ENCODE measurements at regions of chr6 and their contacts with region 1.

Region 1: GRCh38 chr6:141483598-141484061 is 649.1 kb upstream of the GJE1 start:
- DNase-seq: peak; percentile 62
- H3K4me3 Mint-ChIP-seq: peak overlapping the region; percentile 81
- H3K27ac Mint-ChIP-seq: peak overlapping the region; percentile 97
- H3K4me1 Mint-ChIP-seq: peaks cover 48% of the 10 kb centered on the region
- H3K27me3 Mint-ChIP-seq: no peaks in the 10 kb centered on the region

Region 2: DNA sequence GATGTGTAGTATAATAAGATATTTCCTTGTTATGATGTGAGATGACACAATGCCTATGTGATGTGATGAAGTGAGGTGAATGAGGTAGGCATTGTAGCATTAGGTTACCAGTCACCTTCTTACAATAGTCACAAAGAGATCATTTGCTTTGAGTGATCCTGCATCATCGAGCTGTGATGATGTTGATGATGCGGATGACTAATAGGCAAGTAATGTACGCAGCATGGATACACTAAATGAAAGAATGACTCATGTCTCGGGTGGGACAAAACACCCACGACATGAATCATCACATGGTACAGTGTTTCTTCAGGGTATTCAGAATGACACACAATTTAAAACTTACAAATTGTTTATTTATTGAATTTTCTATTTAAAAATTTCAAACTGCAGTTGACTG is 157.2 kb before region 1 on chr6:
- intact Hi-C with region 1: loop called (anchors 1 kb)
- DNase-seq: no peak
- H3K4me3 Mint-ChIP-seq: no peak overlapping the region
- H3K27ac Mint-ChIP-seq: no peak overlapping the region
- H3K4me1 Mint-ChIP-seq: peaks cover 13% of the 10 kb centered on the region
- H3K27me3 Mint-ChIP-seq: peaks cover 2% of the 10 kb centered on the region

Region 3: DNA sequence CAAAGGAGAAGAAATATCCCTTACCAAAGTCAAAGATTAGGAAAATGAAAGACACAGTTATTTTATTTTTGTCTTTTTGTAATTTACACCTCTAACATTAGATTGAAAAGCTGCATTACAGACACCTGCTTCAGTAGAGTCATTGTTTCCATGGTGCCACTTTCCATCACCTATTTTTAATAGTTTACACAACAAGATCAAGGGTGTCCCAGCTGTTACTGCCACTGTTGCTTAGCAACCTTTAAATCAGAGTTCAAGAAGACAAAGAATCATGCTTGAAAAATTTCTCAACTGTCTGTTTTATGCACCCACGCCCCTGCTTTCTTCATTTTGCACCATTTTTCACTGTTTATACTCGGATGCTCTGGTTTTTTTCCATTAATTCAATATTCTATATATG is 19.1 kb before region 1 on chr6:
- intact Hi-C with region 1: loop called (anchors 1 kb)
- DNase-seq: no peak
- H3K4me3 Mint-ChIP-seq: no peak overlapping the region
- H3K27ac Mint-ChIP-seq: no peak overlapping the region
- H3K4me1 Mint-ChIP-seq: peaks cover 14% of the 10 kb centered on the region
- H3K27me3 Mint-ChIP-seq: no peaks in the 10 kb centered on the region

Region 4: DNA sequence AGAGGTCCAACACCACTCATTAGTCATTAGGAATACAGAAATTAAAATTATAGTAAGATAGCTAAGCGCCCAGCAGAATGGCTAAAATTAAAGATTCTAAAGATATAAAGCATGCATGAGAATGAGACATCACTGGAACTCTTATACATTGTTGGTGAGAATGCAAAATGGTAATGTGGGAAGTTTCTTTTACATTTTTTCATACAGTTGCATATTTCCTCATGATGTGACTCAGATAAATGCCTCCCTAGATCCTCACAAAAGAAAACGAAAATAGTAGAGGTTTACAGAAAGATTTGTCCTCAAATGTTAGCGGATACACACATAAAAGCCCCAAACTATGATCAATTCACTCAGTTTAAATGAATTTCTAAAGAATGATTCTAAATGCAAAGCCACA is 15.3 kb after region 1 on chr6:
- intact Hi-C with region 1: no loop called
- DNase-seq: no peak
- H3K4me3 Mint-ChIP-seq: no peak overlapping the region
- H3K27ac Mint-ChIP-seq: no peak overlapping the region
- H3K4me1 Mint-ChIP-seq: no peaks in the 10 kb centered on the region
- H3K27me3 Mint-ChIP-seq: peaks cover 2% of the 10 kb centered on the region

Region 5: DNA sequence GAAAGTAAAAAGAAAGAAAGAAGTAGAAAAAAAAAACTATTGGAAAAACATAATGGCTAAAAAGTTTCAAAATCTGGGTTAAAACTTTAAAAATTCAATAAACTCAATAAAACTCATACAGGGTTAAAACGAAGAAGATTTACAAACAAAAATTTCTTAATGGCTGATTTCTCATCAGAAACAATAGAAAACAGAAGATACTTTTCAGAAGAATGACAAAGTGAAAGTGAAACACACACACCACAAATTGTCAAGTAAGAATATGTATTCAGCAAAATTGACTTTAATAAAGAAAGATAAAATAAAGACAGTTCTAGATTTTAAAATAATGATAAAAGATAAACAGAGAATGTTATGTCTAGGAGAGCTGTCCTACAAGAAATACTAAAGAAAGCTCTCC is 30.2 kb after region 1 on chr6:
- intact Hi-C with region 1: loop called (anchors 2 kb)
- DNase-seq: no peak
- H3K4me3 Mint-ChIP-seq: peak overlapping the region; percentile 26
- H3K27ac Mint-ChIP-seq: no peak overlapping the region
- H3K4me1 Mint-ChIP-seq: peaks cover 13% of the 10 kb centered on the region
- H3K27me3 Mint-ChIP-seq: peaks cover 1% of the 10 kb centered on the region

Region 6: GRCh38 chr6:141562851-141563763 is 79.5 kb after region 1 on chr6:
- intact Hi-C with region 1: loop called (anchors 5 kb)
- DNase-seq: peak; percentile 32
- H3K4me3 Mint-ChIP-seq: peak overlapping the region; percentile 59
- H3K27ac Mint-ChIP-seq: peak overlapping the region; percentile 48
- H3K4me1 Mint-ChIP-seq: peaks cover 18% of the 10 kb centered on the region
- H3K27me3 Mint-ChIP-seq: peaks cover 10% of the 10 kb centered on the region

Region 7: DNA sequence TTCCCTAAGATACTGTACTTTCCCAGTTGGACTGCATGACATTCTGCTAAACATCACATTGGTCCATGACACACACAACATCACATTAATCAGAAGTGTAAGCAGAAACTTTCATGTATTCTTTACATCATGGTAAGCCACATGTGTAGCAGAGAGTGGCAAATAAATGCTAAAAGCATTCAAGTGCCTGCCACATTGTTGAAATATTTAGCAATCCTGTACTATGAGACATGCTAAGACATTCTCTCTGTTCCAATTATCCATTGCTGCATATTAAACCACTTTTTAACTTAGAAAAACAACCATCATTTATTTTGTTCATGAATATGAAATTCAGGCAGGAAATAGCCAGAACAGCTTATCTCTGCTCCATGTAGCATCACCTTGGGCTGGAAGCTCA is 441.4 kb after region 1 on chr6:
- intact Hi-C with region 1: no loop called
- DNase-seq: no peak
- H3K4me3 Mint-ChIP-seq: no peak overlapping the region
- H3K27ac Mint-ChIP-seq: no peak overlapping the region
- H3K4me1 Mint-ChIP-seq: no peaks in the 10 kb centered on the region
- H3K27me3 Mint-ChIP-seq: no peaks in the 10 kb centered on the region

Measured in activated T-helper 2 cell treated with anti-CD3 and anti-CD28 coated beads, Interferon-gamma antibody, Interleukin-2, Interleukin-4, amounts not matched to agents 10 μg/mL and 5 μg/mL and 100 μg/mL, durations not matched to agents 14 hours and 24 hours and 36 hours (primary cell).